OCI-LY7 (cell line): ENCODE measurements at regions of chr2 and their contacts with region 1.

Region 1: GRCh38 chr2:12716282-12717190 is at the start of gene TRIB2:
- DNase-seq: peak; percentile 96
- H3K4me3 ChIP-seq: peak within 1 kb of the TSS; percentile 81
- H3K27ac ChIP-seq: peak within 1 kb of the TSS; percentile 45
- H3K4me1 ChIP-seq: peaks cover 40% of the 10 kb centered on the region
- CTCF ChIP-seq: peak; percentile 61
- total RNA-seq, gene TRIB2: 11.8 and 18.8 TPM in 2 replicates

Region 2: GRCh38 chr2:11829947-11830707 is 886.4 kb before region 1 on chr2:
- CTCF ChIA-PET with region 1: no interaction called
- POLR2A ChIA-PET with region 1: interaction called, 4 read pairs
- intact Hi-C with region 1: loop called (anchors 1 kb)
- DNase-seq: peak; percentile 83
- H3K4me3 ChIP-seq: peak overlapping the region; percentile 46
- H3K27ac ChIP-seq: peak overlapping the region; percentile 81
- H3K4me1 ChIP-seq: peaks cover 55% of the 10 kb centered on the region
- CTCF ChIP-seq: no peak

Region 3: GRCh38 chr2:12127638-12128037 is 588.9 kb before region 1 on chr2:
- CTCF ChIA-PET with region 1: no interaction called
- POLR2A ChIA-PET with region 1: interaction called, 3 read pairs
- intact Hi-C with region 1: loop called (anchors 5 kb)
- DNase-seq: peak; percentile 72
- H3K4me3 ChIP-seq: peak overlapping the region; percentile 35
- H3K27ac ChIP-seq: peak overlapping the region; percentile 58
- H3K4me1 ChIP-seq: peaks cover 34% of the 10 kb centered on the region
- CTCF ChIP-seq: no peak

Region 4: DNA sequence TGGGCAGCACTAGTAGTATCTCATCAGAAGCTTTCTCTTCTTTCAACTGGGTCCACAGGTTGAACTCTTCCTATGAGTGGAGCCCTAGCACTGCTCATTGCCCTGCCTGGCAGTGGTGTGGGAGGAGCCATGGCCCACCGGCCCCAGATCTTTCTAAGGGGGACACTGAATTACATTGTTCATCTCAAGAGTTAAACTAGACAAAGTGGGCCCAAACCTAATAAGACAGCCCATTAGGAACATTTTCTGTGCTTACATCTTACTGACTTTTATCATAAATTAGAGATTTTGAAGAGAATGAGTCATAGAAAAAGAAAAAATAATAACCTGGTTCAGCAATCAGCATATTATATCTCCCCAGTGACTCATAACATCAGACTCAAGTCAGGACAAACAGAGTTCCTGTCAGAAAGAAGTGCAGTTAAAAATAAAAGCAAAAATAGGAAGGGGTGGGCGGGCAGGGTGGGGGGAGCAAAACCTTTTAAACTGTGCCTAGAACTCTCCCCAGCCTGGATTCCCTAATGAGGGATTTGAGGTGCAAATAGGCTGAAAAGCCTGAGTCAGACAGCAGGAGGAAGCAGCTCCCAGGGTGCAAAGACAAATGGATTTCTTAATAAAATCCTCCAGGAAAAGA is 161.4 kb before region 1 on chr2:
- CTCF ChIA-PET with region 1: no interaction called
- POLR2A ChIA-PET with region 1: interaction called, 3 read pairs
- intact Hi-C with region 1: loop called (anchors 2 kb)
- DNase-seq: no peak
- H3K4me3 ChIP-seq: no peak overlapping the region
- H3K27ac ChIP-seq: no peak overlapping the region
- H3K4me1 ChIP-seq: no peaks in the 10 kb centered on the region
- CTCF ChIP-seq: no peak

Region 5: GRCh38 chr2:12728221-12728777 is 11.8 kb after region 1 on chr2:
- CTCF ChIA-PET with region 1: interaction called, 17 read pairs
- POLR2A ChIA-PET with region 1: interaction called, 7 read pairs
- intact Hi-C with region 1: loop called (anchors 1 kb)
- DNase-seq: peak; percentile 91
- H3K4me3 ChIP-seq: peak overlapping the region; percentile 56
- H3K27ac ChIP-seq: peak overlapping the region; percentile 63
- H3K4me1 ChIP-seq: peaks cover 47% of the 10 kb centered on the region
- CTCF ChIP-seq: no peak